ENCODE measurements at regions of chr6 and their contacts with region 1.

Region 1: GRCh38 chr6:134938896-134939295 is 11.0 kb downstream of the ALDH8A1 start:
- DNase-seq: no peak
- ATAC-seq: no peak
- H3K4me3 ChIP-seq: no peak overlapping the region
- H3K27ac ChIP-seq: no peak overlapping the region
- H3K4me1 ChIP-seq: no peaks in the 10 kb centered on the region
- H3K27me3 ChIP-seq: no peaks in the 10 kb centered on the region

Region 2: GRCh38 chr6:134152767-134153485 is 786.0 kb before region 1 on chr6:
- intact Hi-C with region 1: loop called in 2 of 4 experiments (anchors 5 to 10 kb)
- DNase-seq: no peak
- ATAC-seq: no peak
- H3K4me3 ChIP-seq: no peak overlapping the region
- H3K27ac ChIP-seq: no peak overlapping the region
- H3K4me1 ChIP-seq: no peaks in the 10 kb centered on the region
- H3K27me3 ChIP-seq: no peaks in the 10 kb centered on the region

Measured in right cardiac atrium (tissue), 5 donors.